Activated CD4-positive, alpha-beta T cell treated with anti-CD3 and anti-CD28 coated beads for 36 hours (primary cell): ENCODE measurements at regions of chr19 and their contacts with region 1.

Region 1: GRCh38 chr19:47483800-47484690 is at the start of gene KPTN:
- DNase-seq: peak; percentile 95
- ATAC-seq: peak; percentile 90
- H3K4me3 Mint-ChIP-seq: peak within 1 kb of the TSS; percentile 92
- H3K27ac Mint-ChIP-seq: peak within 1 kb of the TSS; percentile 98
- H3K4me1 Mint-ChIP-seq: peaks cover 27% of the 10 kb centered on the region
- H3K27me3 Mint-ChIP-seq: no peaks in the 10 kb centered on the region
- total RNA-seq, gene KPTN: 9.7 to 10.5 TPM

Region 2: DNA sequence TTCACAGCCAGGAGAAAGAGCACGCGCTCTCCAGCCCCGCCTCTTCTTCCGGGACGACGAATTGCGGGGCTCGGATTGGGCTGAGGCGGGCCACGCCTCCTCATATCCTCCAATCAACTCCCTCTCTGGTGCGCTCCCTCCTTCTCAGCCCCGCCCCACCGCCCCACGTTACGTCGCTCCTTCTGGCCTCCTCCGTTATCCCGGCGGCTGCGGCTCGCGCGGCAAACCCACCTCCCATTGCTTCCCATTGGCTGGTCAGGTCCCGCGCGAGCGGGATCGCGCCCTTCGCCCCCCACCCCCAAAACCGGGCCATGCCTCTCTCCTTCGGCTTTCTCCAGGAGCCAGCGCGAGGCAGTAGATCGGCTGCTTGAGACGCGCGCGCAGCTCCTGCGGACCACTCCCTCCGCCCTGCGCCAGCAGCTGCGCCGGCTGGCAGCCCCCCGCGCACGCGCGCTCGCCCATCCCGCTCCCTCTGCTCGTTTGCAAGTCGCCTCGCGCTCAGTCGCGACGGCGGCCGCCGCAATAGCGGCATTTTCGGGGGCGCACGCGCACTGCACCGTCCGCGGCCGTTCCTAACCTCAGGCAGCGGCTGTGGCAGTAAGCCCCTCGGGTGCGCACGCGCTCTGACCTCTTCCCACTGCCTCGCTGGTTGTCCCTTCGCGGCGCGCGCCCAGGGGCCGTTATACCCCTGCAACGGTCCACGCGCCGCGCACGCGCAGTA is 623.8 kb before region 1 on chr19:
- CTCF ChIA-PET with region 1: no interaction called
- POLR2A ChIA-PET with region 1: no interaction called
- intact Hi-C with region 1: loop called in 1 of 2 experiments (anchors 5 kb)
- DNase-seq: peak; percentile 99
- ATAC-seq: peak; percentile 82
- H3K4me3 Mint-ChIP-seq: no peak overlapping the region
- H3K27ac Mint-ChIP-seq: peak overlapping the region; percentile 78
- H3K4me1 Mint-ChIP-seq: peaks cover 25% of the 10 kb centered on the region
- H3K27me3 Mint-ChIP-seq: no peaks in the 10 kb centered on the region

Region 3: GRCh38 chr19:47348819-47349795 is 134.9 kb before region 1 on chr19 and contains the start of gene DHX34:
- CTCF ChIA-PET with region 1: interaction called, 5 read pairs
- POLR2A ChIA-PET with region 1: no interaction called
- intact Hi-C with region 1: loop called in 1 of 2 experiments (anchors 2 kb)
- DNase-seq: peak; percentile 99
- ATAC-seq: peak; percentile 98
- H3K4me3 Mint-ChIP-seq: peak within 1 kb of the TSS; percentile 92
- H3K27ac Mint-ChIP-seq: peak within 1 kb of the TSS; percentile 94
- H3K4me1 Mint-ChIP-seq: peaks cover 35% of the 10 kb centered on the region
- H3K27me3 Mint-ChIP-seq: no peaks in the 10 kb centered on the region
- total RNA-seq, gene DHX34: 15.4 to 17.9 TPM

Region 4: GRCh38 chr19:47447470-47448359 is 36.3 kb before region 1 on chr19:
- CTCF ChIA-PET with region 1: interaction called, 5 read pairs
- POLR2A ChIA-PET with region 1: no interaction called
- intact Hi-C with region 1: loop called in 1 of 2 experiments (anchors 5 kb)
- DNase-seq: peak; percentile 90
- ATAC-seq: peak; percentile 85
- H3K4me3 Mint-ChIP-seq: peak overlapping the region; percentile 1
- H3K27ac Mint-ChIP-seq: no peak overlapping the region
- H3K4me1 Mint-ChIP-seq: peaks cover 44% of the 10 kb centered on the region
- H3K27me3 Mint-ChIP-seq: peaks cover 56% of the 10 kb centered on the region

Region 5: DNA sequence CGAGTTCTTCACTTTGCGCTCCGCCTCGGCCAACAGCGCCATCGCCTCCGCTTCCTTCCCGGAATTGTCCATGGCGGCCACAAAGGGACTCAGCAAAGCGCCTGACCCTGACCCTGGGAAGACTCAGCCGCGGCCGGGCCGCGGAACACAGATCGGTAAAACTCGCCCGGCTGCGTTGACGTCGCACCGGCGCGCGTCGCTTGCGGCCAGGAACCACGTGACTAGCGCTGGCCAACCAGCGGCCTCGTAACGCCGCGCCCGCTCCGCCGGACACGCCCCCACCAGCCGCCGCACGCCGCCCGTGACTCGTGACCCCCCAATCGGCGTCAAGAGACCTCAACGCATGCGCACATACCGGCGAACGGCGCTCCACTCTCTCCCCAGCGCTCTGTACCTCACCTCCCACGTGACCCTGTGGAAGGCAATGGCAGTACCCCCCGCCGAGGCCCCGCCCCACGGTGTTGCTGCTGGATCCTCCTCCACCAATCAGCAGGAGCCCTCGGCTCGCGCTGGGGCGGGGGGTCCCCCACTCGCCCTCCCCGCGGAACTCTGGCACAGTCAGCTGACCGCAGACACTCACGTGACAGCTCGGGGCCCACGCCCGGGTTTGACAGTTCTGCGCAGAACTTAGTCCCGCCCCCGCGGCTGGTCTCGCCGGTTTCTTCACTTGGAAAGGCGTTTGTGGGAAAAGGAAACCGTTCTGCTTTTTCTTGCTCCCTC is 31.0 kb after region 1 on chr19 and contains the start of gene NAPA:
- CTCF ChIA-PET with region 1: interaction called, 14 read pairs
- POLR2A ChIA-PET with region 1: no interaction called
- intact Hi-C with region 1: loop called (anchors 1 kb)
- DNase-seq: peak; percentile 100
- ATAC-seq: peak; percentile 98
- H3K4me3 Mint-ChIP-seq: peak within 1 kb of the TSS; percentile 95
- H3K27ac Mint-ChIP-seq: peak within 1 kb of the TSS; percentile 99
- H3K4me1 Mint-ChIP-seq: peaks cover 76% of the 10 kb centered on the region
- H3K27me3 Mint-ChIP-seq: no peaks in the 10 kb centered on the region
- total RNA-seq, gene NAPA: 54.2 to 68.8 TPM

Region 6: GRCh38 chr19:47697863-47698609 is 214.0 kb after region 1 on chr19:
- CTCF ChIA-PET with region 1: interaction called, 4 read pairs
- POLR2A ChIA-PET with region 1: no interaction called
- intact Hi-C with region 1: loop called in 1 of 2 experiments (anchors 1 kb)
- DNase-seq: peak; percentile 80
- ATAC-seq: peak; percentile 88
- H3K4me3 Mint-ChIP-seq: no peak overlapping the region
- H3K27ac Mint-ChIP-seq: peak overlapping the region; percentile 37
- H3K4me1 Mint-ChIP-seq: no peaks in the 10 kb centered on the region
- H3K27me3 Mint-ChIP-seq: no peaks in the 10 kb centered on the region